BJ (cell line): ENCODE measurements at regions of chr1 and their contacts with region 1.

Region 1: GRCh38 chr1:170530972-170531757 is 801 bp upstream of the GORAB start:
- DNase-seq: no peak
- H3K4me3 ChIP-seq: peak overlapping the region; percentile 55
- H3K27me3 ChIP-seq: no peaks in the 10 kb centered on the region
- CTCF ChIP-seq: no peak

Region 2: DNA sequence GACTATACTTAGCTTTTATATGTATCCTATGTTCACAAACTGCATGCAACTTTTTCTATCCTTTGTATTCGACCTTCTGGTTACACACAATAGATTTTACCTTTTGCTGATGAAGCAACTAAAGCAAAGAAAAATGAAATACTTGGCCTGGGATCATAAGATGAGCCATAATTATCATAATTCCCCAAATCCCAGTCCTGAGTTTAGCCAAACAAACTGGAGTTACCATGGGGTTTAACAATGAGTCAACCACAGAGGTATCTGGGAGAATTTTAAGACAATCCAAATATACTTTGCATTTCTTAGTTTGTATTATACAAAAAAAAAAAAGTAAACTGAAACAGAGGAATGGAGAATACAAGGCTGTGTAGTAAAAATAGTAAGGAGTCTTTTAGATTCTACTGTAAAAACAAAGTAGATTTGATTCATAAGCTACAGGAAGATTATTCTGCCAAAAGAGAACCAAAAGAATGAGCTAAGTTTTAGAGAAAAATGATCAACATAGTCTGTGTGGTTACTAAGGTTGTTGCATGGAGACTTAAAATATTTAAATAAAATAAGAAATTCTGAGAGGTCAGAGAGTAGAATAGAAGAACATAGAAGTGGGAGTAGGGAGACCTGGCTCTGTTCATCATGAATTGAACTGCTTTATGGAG is 59.6 kb before region 1 on chr1:
- CTCF ChIA-PET with region 1: no interaction called
- POLR2A ChIA-PET with region 1: interaction called, 14 read pairs
- DNase-seq: peak; percentile 31
- H3K4me3 ChIP-seq: no peak overlapping the region
- H3K27me3 ChIP-seq: no peaks in the 10 kb centered on the region
- CTCF ChIP-seq: no peak

Region 3: DNA sequence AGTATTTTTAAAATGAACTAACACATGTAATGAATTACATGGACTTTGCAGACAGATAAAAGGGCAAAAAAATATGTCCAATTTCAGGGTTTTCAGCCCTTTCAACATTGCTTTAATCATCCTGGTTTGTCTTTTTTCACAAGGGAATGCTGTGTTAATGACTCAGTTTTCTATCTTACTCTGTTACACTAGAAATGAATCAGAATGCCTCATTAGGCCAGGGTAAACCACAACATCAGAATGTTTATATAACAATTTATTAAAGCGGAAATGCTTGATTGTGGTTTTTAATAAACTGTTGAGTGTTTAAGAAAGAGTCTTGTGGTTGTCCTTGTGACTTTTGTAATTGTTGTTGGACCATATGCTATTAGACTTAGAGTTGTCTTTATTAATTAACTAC is 14.3 kb after region 1 on chr1:
- CTCF ChIA-PET with region 1: no interaction called
- POLR2A ChIA-PET with region 1: no interaction called
- DNase-seq: peak; percentile 92
- H3K4me3 ChIP-seq: no peak overlapping the region
- H3K27me3 ChIP-seq: no peaks in the 10 kb centered on the region
- CTCF ChIP-seq: no peak

Region 4: DNA sequence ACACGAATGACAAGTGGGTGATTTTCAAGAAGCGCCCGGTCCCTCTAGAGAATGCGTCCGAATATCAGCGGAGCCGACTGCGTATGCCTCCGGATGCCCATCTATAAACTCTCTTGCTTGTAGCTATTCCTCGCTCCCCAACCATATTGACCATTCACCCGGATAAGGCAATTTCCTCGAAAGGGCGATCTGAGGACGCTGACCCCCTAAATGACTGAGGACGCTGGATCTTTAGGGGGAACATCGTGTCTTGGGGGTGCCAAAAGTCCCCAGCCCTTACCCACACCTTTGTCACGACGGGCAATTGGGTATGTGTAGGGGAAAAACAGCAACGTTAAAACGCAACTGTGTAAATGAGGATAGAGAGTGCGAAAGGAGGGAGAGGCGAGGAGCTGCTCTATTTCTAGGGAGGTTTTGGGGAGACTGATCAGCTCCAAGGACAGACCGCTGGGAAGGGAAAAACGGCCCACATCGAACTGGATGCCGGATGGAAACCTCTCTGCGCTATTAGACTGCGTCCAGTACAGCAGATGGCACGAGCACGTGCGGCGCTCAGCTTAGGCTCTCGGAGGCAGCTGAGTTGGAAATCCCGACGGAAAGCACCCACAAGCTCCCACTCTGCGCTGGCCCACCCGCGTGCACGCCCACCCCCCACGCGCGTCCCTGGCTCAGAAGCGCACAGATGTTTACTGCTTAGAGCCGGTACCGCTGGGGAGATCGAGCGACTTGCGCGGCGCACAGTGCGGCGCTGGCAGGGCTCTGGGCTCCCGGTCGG is 129.9 kb after region 1 on chr1:
- CTCF ChIA-PET with region 1: no interaction called
- POLR2A ChIA-PET with region 1: interaction called, 16 read pairs
- DNase-seq: no peak
- H3K4me3 ChIP-seq: peak overlapping the region; percentile 95
- H3K27me3 ChIP-seq: no peaks in the 10 kb centered on the region
- CTCF ChIP-seq: no peak